ENCODE measurements at regions of chr9 and their contacts with region 1.

Region 1: GRCh38 chr9:90929626-90930025 is 128.0 kb downstream of the SYK start:
- DNase-seq: no peak
- H3K4me3 ChIP-seq: no peak overlapping the region
- H3K27ac ChIP-seq: no peak overlapping the region
- H3K4me1 ChIP-seq: no peaks in the 10 kb centered on the region
- H3K27me3 ChIP-seq: no peaks in the 10 kb centered on the region
- CTCF ChIP-seq: no peak
- POLR2A ChIP-seq: no peak

Region 2: GRCh38 chr9:90946975-90947374 is 17.3 kb after region 1 on chr9:
- intact Hi-C with region 1: loop called (anchors 2 kb)
- DNase-seq: no peak
- H3K4me3 ChIP-seq: no peak overlapping the region
- H3K27ac ChIP-seq: no peak overlapping the region
- H3K4me1 ChIP-seq: no peaks in the 10 kb centered on the region
- H3K27me3 ChIP-seq: no peaks in the 10 kb centered on the region
- CTCF ChIP-seq: no peak
- POLR2A ChIP-seq: no peak

Region 3: DNA sequence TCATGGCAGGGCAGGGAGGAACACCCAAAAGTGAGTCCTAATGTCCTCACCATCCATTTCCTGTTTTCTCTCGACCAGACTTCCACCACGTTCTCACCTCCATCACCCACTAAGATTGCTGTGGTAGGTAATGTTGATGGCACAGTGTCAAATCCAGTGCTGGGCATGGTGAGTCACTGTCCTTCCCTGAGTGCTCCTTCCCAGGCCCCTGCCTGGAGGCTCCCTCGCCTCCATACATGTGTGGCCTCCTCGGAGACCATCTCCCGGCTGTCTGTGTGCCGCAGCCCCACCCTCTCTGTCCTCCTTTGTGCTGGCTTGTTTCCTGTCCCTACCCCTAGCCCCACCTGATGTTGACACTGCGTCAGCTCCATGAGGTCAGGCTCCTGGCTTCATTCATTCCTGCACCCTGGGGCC is 49.5 kb after region 1 on chr9:
- intact Hi-C with region 1: no loop called
- DNase-seq: no peak
- H3K4me3 ChIP-seq: no peak overlapping the region
- H3K27ac ChIP-seq: no peak overlapping the region
- H3K4me1 ChIP-seq: no peaks in the 10 kb centered on the region
- H3K27me3 ChIP-seq: no peaks in the 10 kb centered on the region
- CTCF ChIP-seq: no peak
- POLR2A ChIP-seq: no peak

Region 4: GRCh38 chr9:91036826-91037510 is 107.3 kb after region 1 on chr9:
- intact Hi-C with region 1: no loop called
- DNase-seq: peak; percentile 89
- H3K4me3 ChIP-seq: no peak overlapping the region
- H3K27ac ChIP-seq: no peak overlapping the region
- H3K4me1 ChIP-seq: peaks cover 15% of the 10 kb centered on the region
- H3K27me3 ChIP-seq: no peaks in the 10 kb centered on the region
- CTCF ChIP-seq: peak; percentile 37 to 50 (median 50)
- POLR2A ChIP-seq: no peak

Region 5: DNA sequence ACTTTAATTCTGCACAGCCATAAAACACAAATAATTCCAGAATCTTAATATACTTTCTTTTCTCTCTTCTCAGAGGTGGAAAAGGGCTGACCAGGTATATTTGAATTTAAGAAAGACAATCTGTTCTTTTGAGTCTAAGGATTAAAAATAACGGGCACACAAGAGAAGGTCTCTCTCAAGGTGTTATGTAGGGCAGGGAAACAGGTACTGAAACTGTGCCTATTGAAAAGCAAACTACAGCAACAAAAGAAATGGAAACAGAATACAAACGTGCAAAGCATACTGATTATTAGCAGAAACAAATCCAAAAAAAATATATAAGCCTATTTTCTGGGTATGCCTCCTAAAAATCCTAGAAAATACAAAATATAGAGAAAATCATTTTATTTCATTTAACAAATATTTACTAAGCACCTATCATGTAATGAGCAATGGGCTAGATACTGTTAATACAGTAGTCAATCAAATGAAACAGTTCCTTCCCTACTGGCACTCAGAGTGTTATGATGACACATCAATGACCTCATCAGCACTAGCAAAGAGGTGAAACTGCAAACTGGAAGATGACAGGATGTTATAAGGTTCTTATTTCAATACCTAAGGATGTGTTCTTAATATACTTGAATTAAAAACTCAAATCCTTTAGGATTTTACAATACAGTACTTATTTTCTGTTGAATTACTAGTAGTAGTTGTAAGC is 344.4 kb after region 1 on chr9:
- intact Hi-C with region 1: no loop called
- DNase-seq: no peak
- H3K4me3 ChIP-seq: no peak overlapping the region
- H3K27ac ChIP-seq: no peak overlapping the region
- H3K4me1 ChIP-seq: no peaks in the 10 kb centered on the region
- H3K27me3 ChIP-seq: no peaks in the 10 kb centered on the region
- CTCF ChIP-seq: no peak
- POLR2A ChIP-seq: no peak

Region 6: GRCh38 chr9:91536211-91536691 is 606.6 kb after region 1 on chr9:
- intact Hi-C with region 1: no loop called
- DNase-seq: no peak
- H3K4me3 ChIP-seq: no peak overlapping the region
- H3K27ac ChIP-seq: no peak overlapping the region
- H3K4me1 ChIP-seq: no peaks in the 10 kb centered on the region
- H3K27me3 ChIP-seq: no peaks in the 10 kb centered on the region
- CTCF ChIP-seq: no peak
- POLR2A ChIP-seq: no peak

Measured in testis (tissue), 5 donors.